Left cardiac atrium (tissue), 4 donors: ENCODE measurements at regions of chr19 and their contacts with region 1.

Region 1: DNA sequence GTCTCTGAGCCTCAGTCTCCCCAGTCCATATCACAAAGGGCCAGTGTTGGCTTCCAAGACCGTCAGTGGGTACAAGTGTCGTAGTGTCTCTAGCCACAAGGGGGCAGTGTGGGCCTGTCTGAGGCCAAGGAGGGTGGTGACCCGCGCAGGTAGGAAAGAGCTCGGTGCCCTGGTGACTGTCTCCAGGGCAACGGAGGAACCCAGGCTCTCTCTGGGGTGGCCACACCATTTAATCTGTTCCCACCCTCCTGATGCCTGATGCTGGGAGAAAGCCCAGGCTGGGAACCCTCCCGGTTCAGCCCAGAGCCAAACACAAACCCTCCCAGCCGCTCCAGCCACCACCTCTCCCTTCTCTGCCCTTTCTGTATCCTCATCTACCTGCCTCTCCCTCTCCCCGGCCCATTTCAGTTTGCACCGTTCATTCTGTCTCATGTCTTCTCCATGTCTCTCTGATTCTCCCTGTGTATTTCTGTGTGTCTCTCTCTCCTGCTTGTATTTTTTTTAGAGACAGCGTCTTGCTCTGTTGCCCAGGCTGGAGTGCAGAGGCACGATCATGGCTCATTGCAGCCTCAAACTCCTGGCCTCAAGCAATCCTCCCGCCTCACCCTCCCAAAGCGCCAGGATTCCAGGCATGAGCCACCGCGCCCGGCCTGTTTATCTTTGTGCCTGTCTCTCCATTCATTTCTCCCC is 17.5 kb upstream of the MEIS3 start:
- DNase-seq: peak; percentile 75
- ATAC-seq: peak; percentile 91 to 94

Region 2: DNA sequence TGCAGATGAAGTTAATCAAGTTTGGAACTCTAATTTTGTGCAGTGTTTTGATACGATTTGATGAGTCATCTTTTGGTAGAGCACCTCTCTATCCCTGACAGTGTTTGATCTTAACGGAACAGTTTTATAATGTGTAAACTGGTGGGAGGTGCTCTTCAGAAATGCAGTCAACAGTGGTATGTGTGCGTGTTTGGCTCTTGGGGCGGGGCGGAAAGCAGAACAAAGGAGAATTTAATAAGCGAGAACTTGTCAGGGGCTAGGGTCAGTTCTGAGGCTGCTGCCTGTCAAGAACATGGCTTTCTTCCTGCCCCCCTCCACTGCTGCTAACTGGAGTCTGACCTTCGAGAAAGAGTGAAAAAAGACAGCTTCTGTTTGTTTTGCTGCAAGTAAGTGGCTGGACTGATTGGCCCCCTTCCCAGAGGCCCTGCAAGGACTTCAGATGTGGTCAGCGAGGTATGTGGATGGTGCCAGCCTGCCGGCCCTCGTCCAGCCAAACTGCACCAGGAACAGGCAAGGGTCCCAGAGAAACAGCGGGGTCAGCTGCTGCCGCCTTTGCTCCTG is 246.6 kb before region 1 on chr19:
- intact Hi-C with region 1: no loop called
- DNase-seq: peak; percentile 57
- ATAC-seq: peak; percentile 70 to 79

Region 3: DNA sequence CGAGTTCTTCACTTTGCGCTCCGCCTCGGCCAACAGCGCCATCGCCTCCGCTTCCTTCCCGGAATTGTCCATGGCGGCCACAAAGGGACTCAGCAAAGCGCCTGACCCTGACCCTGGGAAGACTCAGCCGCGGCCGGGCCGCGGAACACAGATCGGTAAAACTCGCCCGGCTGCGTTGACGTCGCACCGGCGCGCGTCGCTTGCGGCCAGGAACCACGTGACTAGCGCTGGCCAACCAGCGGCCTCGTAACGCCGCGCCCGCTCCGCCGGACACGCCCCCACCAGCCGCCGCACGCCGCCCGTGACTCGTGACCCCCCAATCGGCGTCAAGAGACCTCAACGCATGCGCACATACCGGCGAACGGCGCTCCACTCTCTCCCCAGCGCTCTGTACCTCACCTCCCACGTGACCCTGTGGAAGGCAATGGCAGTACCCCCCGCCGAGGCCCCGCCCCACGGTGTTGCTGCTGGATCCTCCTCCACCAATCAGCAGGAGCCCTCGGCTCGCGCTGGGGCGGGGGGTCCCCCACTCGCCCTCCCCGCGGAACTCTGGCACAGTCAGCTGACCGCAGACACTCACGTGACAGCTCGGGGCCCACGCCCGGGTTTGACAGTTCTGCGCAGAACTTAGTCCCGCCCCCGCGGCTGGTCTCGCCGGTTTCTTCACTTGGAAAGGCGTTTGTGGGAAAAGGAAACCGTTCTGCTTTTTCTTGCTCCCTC is 78.2 kb after region 1 on chr19 and contains the start of gene NAPA:
- intact Hi-C with region 1: loop called (anchors 2 to 5 kb)
- DNase-seq: peak; percentile 100
- ATAC-seq: peak; percentile 97 to 98
- total RNA-seq, gene NAPA: 92.7 to 113 TPM

Region 4: DNA sequence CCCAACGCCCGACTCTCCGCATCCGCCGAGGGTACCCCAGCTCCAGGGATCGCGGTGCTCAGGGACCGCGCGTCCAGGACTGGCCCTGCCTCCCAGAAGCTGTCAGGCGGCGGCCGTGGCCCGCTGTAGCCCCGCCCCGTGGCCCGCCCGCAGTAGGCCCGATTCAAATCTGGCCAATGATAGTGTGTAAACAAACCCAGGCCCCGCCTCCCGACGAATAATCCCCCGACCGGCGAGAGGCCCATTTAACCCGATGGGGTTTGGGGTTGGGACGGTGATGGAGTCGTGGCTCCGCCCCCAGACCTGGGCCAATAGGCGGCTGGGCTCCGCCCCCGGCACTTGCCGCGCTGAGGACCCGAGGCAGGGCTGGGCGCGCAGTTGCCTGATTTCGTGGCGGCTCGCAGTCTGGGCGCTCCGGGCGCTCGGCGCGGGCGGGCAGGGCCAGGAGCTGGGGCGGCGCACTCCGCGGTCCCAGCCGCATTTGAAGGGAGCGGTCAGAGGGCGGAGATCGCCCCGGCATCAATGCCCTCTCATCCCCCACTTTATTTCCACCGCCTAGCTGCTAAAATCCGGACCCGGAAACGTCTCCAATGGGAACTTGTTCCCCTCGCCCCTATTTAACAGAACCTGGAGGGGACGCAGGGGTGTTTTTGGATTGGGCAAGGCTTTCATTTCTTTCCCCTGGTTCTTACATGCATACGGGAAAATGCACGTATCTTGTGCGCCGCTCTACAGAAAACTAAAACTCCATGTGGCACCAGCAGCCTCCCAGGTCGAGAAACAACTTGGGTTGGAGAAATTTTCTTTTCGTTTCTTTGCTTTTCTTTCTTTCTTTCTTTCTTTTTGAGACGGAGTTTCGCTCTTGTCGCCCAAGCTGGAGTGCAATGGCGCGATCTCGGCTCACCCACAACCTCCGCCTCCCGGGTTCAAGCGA is 163.7 kb after region 1 on chr19:
- intact Hi-C with region 1: loop called in 1 of 2 experiments (anchors 10 kb)
- DNase-seq: peak; percentile 100
- ATAC-seq: peak; percentile 98 to 99

Region 5: GRCh38 chr19:47697863-47698609 is 261.2 kb after region 1 on chr19:
- intact Hi-C with region 1: loop called (anchors 2 kb)
- DNase-seq: peak; percentile 78
- ATAC-seq: peak; percentile 82 to 83

Region 6: GRCh38 chr19:47707135-47707925 is 270.5 kb after region 1 on chr19:
- intact Hi-C with region 1: loop called in 1 of 2 experiments (anchors 2 kb)
- DNase-seq: peak; percentile 75
- ATAC-seq: peak; percentile 85 to 87